CD4-positive, alpha-beta memory T cell (primary cell): ENCODE measurements at regions of chr1 and their contacts with region 1.

Region 1: GRCh38 chr1:168342572-168343280 is 62.0 kb downstream of the TBX19 start:
- DNase-seq: peak; percentile 86 to 91 (median 89)
- H3K4me3 ChIP-seq: no peak overlapping the region
- H3K4me3 Mint-ChIP-seq: peak overlapping the region; percentile 55 to 82 (median 64)
- H3K27ac ChIP-seq: peak overlapping the region; percentile 17
- H3K27ac Mint-ChIP-seq: peak overlapping the region; percentile 91 to 97 (median 93)
- H3K4me1 ChIP-seq: peaks cover 34% of the 10 kb centered on the region
- H3K4me1 Mint-ChIP-seq: peaks cover 34 to 74% (median 49%) of the 10 kb centered on the region in 4 donors
- H3K27me3 ChIP-seq: no peaks in the 10 kb centered on the region
- H3K27me3 Mint-ChIP-seq: no peaks in the 10 kb centered on the region

Region 2: GRCh38 chr1:168225476-168226190 is 117.1 kb before region 1 on chr1 and contains the start of gene SFT2D2:
- CTCF ChIA-PET with region 1: interaction called, 7 read pairs
- POLR2A ChIA-PET with region 1: interaction called, 4 read pairs
- intact Hi-C with region 1: loop called (anchors 5 kb)
- DNase-seq: peak; percentile 78 to 85 (median 81)
- H3K4me3 ChIP-seq: peak within 1 kb of the TSS; percentile 70 to 84
- H3K4me3 Mint-ChIP-seq: peak within 1 kb of the TSS; percentile 95 to 98 (median 96)
- H3K27ac ChIP-seq: peak within 1 kb of the TSS; percentile 80
- H3K27ac Mint-ChIP-seq: peak within 1 kb of the TSS; percentile 87 to 98 (median 96)
- H3K4me1 ChIP-seq: peaks cover 31% of the 10 kb centered on the region
- H3K4me1 Mint-ChIP-seq: peaks cover 25 to 48% (median 38%) of the 10 kb centered on the region in 4 donors
- H3K27me3 ChIP-seq: no peaks in the 10 kb centered on the region
- H3K27me3 Mint-ChIP-seq: peaks cover 2% of the 10 kb centered on the region in 2 donors
- total RNA-seq, gene SFT2D2: 61.7 to 63.2 TPM

Region 3: GRCh38 chr1:168365719-168366479 is 23.2 kb after region 1 on chr1:
- CTCF ChIA-PET with region 1: interaction called, 543 read pairs
- POLR2A ChIA-PET with region 1: interaction called, 162 read pairs
- intact Hi-C with region 1: loop called (anchors 1 kb)
- DNase-seq: peak in 4 of 5 donors; percentile 39 to 46 (median 42)
- H3K4me3 ChIP-seq: no peak overlapping the region
- H3K4me3 Mint-ChIP-seq: no peak overlapping the region
- H3K27ac ChIP-seq: no peak overlapping the region
- H3K27ac Mint-ChIP-seq: peak overlapping the region in 5 of 7 donors; percentile 1 to 69 (median 32)
- H3K4me1 ChIP-seq: peaks cover 47% of the 10 kb centered on the region
- H3K4me1 Mint-ChIP-seq: peaks cover 33 to 48% (median 40%) of the 10 kb centered on the region in 4 donors
- H3K27me3 ChIP-seq: no peaks in the 10 kb centered on the region
- H3K27me3 Mint-ChIP-seq: no peaks in the 10 kb centered on the region

Region 4: DNA sequence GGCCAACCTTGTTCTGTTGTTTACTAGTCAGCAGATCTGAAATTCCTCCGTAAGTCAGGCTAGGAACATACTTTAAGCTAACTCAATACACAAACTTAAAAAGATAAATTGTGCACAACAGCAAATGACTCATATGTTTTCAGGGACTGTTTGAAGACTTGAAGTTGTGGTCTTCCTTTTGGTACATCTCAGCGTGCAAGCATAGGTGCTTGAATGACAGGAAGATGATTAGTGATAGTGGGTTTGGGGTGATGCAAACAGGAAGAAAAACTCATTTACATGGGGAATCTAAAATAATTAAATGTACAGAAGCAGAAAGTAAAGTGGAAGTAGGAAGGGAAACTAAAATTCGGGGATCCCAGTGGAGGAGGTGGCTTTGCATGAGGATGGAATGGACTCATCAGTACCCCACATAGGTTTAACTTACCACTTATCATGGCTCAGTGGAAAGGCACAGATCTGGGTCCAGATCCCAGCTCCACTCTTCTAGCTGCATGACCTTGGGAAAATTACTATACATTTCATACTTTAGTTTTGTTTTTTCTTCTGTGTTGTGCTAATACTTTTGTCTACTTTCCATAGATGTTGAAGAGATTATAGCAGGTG is 78.8 kb after region 1 on chr1:
- CTCF ChIA-PET with region 1: interaction called, 30 read pairs
- POLR2A ChIA-PET with region 1: interaction called, 26 read pairs
- intact Hi-C with region 1: loop called (anchors 2 kb)
- DNase-seq: peak; percentile 45 to 66 (median 52)
- H3K4me3 ChIP-seq: no peak overlapping the region
- H3K4me3 Mint-ChIP-seq: peak overlapping the region; percentile 32 to 81 (median 60)
- H3K27ac ChIP-seq: peak overlapping the region; percentile 50
- H3K27ac Mint-ChIP-seq: peak overlapping the region; percentile 54 to 86 (median 80)
- H3K4me1 ChIP-seq: peaks cover 35% of the 10 kb centered on the region
- H3K4me1 Mint-ChIP-seq: peaks cover 22 to 46% (median 36%) of the 10 kb centered on the region in 4 donors
- H3K27me3 ChIP-seq: no peaks in the 10 kb centered on the region
- H3K27me3 Mint-ChIP-seq: no peaks in the 10 kb centered on the region

Region 5: GRCh38 chr1:168535536-168535935 is 192.8 kb after region 1 on chr1:
- CTCF ChIA-PET with region 1: interaction called, 11 read pairs
- POLR2A ChIA-PET with region 1: interaction called, 9 read pairs
- intact Hi-C with region 1: loop called (anchors 5 kb)
- DNase-seq: peak; percentile 47 to 63 (median 57)
- H3K4me3 ChIP-seq: peak overlapping the region in 1 of 2 donors; percentile 16
- H3K4me3 Mint-ChIP-seq: peak overlapping the region; percentile 34 to 84 (median 72)
- H3K27ac ChIP-seq: no peak overlapping the region
- H3K27ac Mint-ChIP-seq: peak overlapping the region; percentile 45 to 93 (median 78)
- H3K4me1 ChIP-seq: peaks cover 66% of the 10 kb centered on the region
- H3K4me1 Mint-ChIP-seq: peaks cover 53 to 87% (median 69%) of the 10 kb centered on the region in 4 donors
- H3K27me3 ChIP-seq: no peaks in the 10 kb centered on the region
- H3K27me3 Mint-ChIP-seq: no peaks in the 10 kb centered on the region

Region 6: GRCh38 chr1:169367486-169368405 is 1025.0 kb after region 1 on chr1 and contains the starts of genes BLZF1 and NME7:
- CTCF ChIA-PET with region 1: interaction called, 10 read pairs
- POLR2A ChIA-PET with region 1: interaction called, 5 read pairs
- intact Hi-C with region 1: loop called (anchors 1 kb)
- DNase-seq: peak; percentile 95 to 99 (median 98)
- H3K4me3 ChIP-seq: peak within 1 kb of the TSS; percentile 96
- H3K4me3 Mint-ChIP-seq: peak within 1 kb of the TSS in 3 of 8 donors; percentile 16 to 51 (median 24)
- H3K27ac ChIP-seq: peak within 1 kb of the TSS; percentile 71
- H3K27ac Mint-ChIP-seq: peak within 1 kb of the TSS in 3 of 7 donors; percentile 25 to 54 (median 33)
- H3K4me1 ChIP-seq: peaks cover 44% of the 10 kb centered on the region
- H3K4me1 Mint-ChIP-seq: peaks cover 22 to 31% (median 23%) of the 10 kb centered on the region in 4 donors
- H3K27me3 ChIP-seq: no peaks in the 10 kb centered on the region
- H3K27me3 Mint-ChIP-seq: no peaks in the 10 kb centered on the region
- total RNA-seq, gene BLZF1: 20.0 to 23.8 TPM
- total RNA-seq, gene NME7: 12.0 to 14.3 TPM